Activated CD8-positive, alpha-beta T cell treated with anti-CD3 and anti-CD28 coated beads for 36 hours (primary cell): ENCODE measurements at regions of chr3 and their contacts with region 1.

Region 1: GRCh38 chr3:5187156-5187919 is at the start of gene EDEM1:
- DNase-seq: peak; percentile 93
- ATAC-seq: peak; percentile 86
- H3K4me3 Mint-ChIP-seq: peak within 1 kb of the TSS; percentile 100
- H3K27ac Mint-ChIP-seq: peak within 1 kb of the TSS; percentile 94
- H3K4me1 Mint-ChIP-seq: peaks cover 21% of the 10 kb centered on the region
- H3K27me3 Mint-ChIP-seq: no peaks in the 10 kb centered on the region
- CTCF ChIP-seq: no peak
- total RNA-seq, gene EDEM1: 156 to 159 TPM

Region 2: GRCh38 chr3:5122030-5122740 is 65.2 kb before region 1 on chr3 and contains the start of gene ARL8B:
- CTCF ChIA-PET with region 1: interaction called, 9 read pairs
- POLR2A ChIA-PET with region 1: interaction called, 34 read pairs
- intact Hi-C with region 1: loop called (anchors 5 kb)
- DNase-seq: peak; percentile 95
- ATAC-seq: peak; percentile 97
- H3K4me3 Mint-ChIP-seq: peak within 1 kb of the TSS; percentile 86
- H3K27ac Mint-ChIP-seq: peak within 1 kb of the TSS; percentile 92
- H3K4me1 Mint-ChIP-seq: peaks cover 41% of the 10 kb centered on the region
- H3K27me3 Mint-ChIP-seq: no peaks in the 10 kb centered on the region
- CTCF ChIP-seq: peak; percentile 95
- total RNA-seq, gene ARL8B: 33.9 to 38.9 TPM